ENCODE measurements at regions of chr13 and their contacts with region 1.

Region 1: GRCh38 chr13:30132623-30133553 is 174.5 kb downstream of the KATNAL1 start:
- DNase-seq: peak; percentile 97

Region 2: GRCh38 chr13:30334663-30335386 is 201.9 kb after region 1 on chr13:
- intact Hi-C with region 1: loop called (anchors 5 kb)
- DNase-seq: no peak

Region 3: GRCh38 chr13:30382836-30383525 is 250.1 kb after region 1 on chr13:
- intact Hi-C with region 1: no loop called
- DNase-seq: no peak

Region 4: GRCh38 chr13:30572859-30573275 is 440.0 kb after region 1 on chr13:
- intact Hi-C with region 1: loop called (anchors 10 kb)
- DNase-seq: no peak

Region 5: DNA sequence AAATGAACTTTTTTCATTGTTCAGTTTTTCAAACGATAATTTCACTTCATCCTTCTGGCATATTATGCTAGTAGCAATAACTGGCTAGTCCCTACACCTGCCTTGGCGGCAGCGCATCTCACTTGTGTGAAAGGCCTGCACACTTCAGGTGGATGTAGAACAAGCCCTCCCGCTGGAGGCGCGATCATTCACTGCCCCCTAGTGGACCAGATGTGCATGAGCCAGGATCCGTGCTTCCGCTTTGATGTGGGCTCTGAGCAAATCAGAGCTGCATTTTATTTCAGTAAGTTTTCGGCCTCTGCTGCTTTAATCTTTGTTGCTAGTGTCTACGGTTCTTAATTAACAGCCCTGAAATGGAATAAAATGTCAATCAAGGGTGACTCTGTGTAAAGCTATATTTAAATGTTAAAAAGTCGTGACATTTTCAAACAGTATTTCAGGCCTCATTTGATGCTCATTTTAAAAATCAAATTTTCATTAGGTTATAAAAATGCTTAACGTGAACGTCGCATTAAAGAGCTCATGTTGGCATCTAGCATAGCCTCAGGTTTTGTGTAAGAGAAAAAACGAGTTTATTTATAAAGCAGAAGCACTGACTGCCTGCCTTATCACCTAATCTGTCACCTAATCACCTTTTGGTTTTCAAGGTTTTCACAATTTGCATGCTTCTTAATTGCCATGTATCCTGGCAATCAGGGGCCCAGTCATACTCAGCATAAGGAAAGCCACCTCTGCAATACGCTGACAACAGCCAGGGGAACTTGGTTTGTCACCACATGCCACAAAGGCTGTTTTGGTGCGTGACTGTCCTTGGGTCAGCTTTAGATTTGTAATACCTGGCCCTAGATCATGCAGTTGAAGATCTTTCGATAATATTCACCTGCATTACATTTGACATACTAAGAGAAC is 911.7 kb after region 1 on chr13:
- intact Hi-C with region 1: loop called (anchors 10 kb)
- DNase-seq: peak; percentile 88